ENCODE measurements at regions of chr2 and their contacts with region 1.

Region 1: DNA sequence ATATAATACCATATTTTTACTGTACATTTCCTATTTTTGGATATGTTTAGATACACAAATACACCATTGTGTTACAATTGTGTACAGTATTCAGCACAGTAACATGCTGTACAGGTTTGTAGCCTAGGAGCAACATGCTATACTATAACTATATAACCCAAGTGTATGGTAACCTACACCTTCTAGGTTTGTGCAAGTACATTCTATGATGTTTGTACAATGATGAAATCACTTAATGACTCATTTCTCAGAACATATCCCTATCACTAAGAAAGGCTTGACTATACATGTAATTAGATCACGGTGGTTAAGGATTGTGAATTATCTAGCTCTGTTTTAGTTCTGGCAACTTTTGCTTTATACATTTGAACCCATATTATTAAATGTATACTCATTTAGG is 31.3 kb downstream of the NPHP1 start:
- DNase-seq: no peak
- ATAC-seq: peak in 1 of 4 donors; percentile 22
- H3K4me3 ChIP-seq: no peak overlapping the region
- H3K27ac ChIP-seq: no peak overlapping the region
- H3K4me1 ChIP-seq: peaks cover 35% of the 10 kb centered on the region
- H3K27me3 ChIP-seq: no peaks in the 10 kb centered on the region
- CTCF ChIP-seq: no peak

Region 2: DNA sequence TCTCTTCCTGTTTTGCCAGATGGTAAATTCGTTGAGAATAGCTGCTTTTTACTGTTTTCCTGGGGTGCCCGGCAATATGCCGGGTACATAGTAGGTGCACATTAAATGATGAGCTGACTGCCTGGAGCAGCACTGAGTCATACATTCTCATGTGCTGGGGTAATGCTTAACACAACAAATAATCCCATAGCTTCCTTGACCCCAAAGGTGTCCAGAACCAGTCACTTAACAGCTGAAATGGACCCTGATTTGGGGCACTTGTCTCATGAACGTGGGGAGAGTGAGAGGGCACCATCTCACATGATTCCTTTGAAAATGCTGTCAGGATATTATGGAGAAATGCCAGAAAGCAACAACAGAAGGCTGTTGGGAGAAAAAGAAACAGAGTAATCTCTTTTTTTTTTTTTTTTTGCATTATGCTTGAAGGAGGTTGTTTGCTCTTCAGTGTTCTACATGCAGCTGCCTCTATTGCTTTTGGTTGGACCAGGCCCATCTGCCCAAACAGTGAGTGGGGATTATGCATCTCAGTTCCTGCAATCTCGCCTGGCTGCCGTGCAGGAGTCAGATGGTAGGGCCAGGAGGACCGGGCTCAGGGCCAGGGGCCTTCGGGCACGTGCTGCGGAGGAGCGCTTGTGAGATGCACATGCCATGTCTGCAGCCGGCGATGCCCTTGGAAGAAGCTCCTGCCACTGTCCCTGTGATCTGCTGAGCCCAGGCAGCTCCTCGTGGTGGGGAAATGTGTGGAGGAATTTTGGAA is 882.5 kb before region 1 on chr2:
- intact Hi-C with region 1: loop called in 1 of 2 experiments (anchors 10 kb)
- DNase-seq: peak in 1 of 2 donors; percentile 76
- ATAC-seq: peak; percentile 37 to 75 (median 55)
- H3K4me3 ChIP-seq: no peak overlapping the region
- H3K27ac ChIP-seq: no peak overlapping the region
- H3K4me1 ChIP-seq: peaks cover 38% of the 10 kb centered on the region
- H3K27me3 ChIP-seq: no peaks in the 10 kb centered on the region
- CTCF ChIP-seq: no peak

Region 3: DNA sequence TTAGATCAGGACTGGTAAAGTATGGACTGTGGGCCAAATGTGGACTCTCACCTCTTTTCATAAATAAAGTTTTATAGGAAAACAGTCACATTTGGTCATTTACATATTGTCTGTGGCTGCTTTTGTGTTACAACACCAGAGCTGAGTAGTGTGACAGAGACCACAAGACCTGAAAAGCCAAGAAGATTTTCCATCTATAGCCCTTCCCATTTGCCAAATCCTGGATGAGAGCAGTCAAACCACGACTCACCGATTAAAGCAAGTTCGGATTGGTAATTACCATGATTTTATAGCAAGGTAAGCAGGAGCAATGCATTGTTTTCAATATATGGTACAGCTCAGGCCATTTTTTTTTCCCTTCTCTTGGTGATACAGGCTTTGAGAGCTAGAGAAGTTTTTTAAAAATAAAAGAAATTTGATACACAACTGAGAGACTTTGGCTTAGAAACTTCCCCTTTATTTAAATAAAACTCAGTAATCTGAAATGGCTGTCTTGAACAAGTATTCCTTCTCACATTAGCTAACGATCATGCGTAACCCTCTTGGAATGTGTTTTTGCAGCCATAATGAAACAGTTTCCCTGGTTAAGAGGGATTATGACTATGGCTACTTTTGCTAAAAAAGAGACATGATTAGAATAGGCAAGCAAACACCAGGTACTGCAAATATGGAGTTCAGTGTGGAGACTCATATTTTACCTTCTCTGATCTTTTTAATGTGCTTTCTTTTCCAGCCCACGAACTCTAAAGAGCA is 48.4 kb before region 1 on chr2:
- intact Hi-C with region 1: no loop called
- DNase-seq: no peak
- ATAC-seq: no peak
- H3K4me3 ChIP-seq: no peak overlapping the region
- H3K27ac ChIP-seq: no peak overlapping the region
- H3K4me1 ChIP-seq: no peaks in the 10 kb centered on the region
- H3K27me3 ChIP-seq: no peaks in the 10 kb centered on the region
- CTCF ChIP-seq: no peak

Region 4: DNA sequence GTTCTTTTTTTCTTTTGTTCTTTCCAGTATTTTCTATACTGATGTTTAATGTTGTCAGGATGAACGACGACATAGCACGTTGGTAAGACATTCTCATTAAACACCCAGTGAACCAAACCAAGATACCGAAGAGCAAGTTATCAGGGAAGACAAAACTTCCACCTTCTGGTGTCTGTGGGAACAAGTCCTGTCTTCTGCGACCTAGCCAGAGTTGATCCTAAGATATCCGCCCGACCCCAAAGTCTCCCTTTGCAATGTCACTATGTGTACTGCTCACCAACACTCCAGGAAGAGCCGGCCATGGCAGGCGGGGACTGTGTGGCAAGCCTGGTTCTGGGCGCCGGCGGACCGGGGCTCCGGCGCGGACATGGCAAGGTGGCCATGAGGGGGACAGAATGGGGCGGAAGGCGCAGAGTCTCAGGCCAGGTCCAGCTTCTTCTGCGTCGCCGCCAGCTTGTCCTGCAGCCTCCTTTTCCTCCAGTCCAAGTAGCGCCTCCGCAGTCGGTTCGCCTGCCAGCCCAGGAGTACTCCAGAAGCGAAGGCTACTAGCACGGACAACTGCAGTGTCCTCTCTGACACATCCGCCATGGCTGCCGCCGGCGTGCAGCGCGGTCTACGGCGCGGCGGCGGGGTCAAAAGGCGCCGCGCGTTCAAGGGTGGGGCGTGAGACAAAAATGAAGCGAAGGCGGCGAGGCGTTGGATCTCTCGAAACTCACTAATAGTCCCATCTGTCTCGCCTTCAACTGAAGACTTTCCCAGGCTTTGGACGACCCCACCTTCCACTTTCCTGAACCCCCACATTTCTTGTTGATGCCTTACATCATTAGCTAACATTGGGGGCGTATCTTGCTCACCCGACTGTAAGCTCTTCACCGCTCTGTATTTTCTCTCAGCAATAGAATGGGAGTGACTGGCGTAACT is 38.7 kb after region 1 on chr2 and contains the start of gene MTLN:
- intact Hi-C with region 1: loop called (anchors 5 kb)
- DNase-seq: peak; percentile 76 to 86
- ATAC-seq: peak; percentile 72 to 80 (median 78)
- H3K4me3 ChIP-seq: peak within 1 kb of the TSS; percentile 81
- H3K27ac ChIP-seq: peak within 1 kb of the TSS; percentile 93
- H3K4me1 ChIP-seq: peaks cover 36% of the 10 kb centered on the region
- H3K27me3 ChIP-seq: no peaks in the 10 kb centered on the region
- CTCF ChIP-seq: no peak
- total RNA-seq, gene MTLN: 285 to 394 (median 350) TPM

Measured in psoas muscle (tissue), 8 donors.